ENCODE measurements at regions of chr3 and their contacts with region 1.

Region 1: GRCh38 chr3:83715307-83715706 is 1243.5 kb upstream of the CADM2 start:
- DNase-seq: no peak
- H3K4me3 Mint-ChIP-seq: no peak overlapping the region
- H3K27ac Mint-ChIP-seq: no peak overlapping the region
- H3K4me1 Mint-ChIP-seq: peaks cover 6% of the 10 kb centered on the region
- H3K27me3 Mint-ChIP-seq: no peaks in the 10 kb centered on the region
- CTCF ChIP-seq: no peak

Region 2: DNA sequence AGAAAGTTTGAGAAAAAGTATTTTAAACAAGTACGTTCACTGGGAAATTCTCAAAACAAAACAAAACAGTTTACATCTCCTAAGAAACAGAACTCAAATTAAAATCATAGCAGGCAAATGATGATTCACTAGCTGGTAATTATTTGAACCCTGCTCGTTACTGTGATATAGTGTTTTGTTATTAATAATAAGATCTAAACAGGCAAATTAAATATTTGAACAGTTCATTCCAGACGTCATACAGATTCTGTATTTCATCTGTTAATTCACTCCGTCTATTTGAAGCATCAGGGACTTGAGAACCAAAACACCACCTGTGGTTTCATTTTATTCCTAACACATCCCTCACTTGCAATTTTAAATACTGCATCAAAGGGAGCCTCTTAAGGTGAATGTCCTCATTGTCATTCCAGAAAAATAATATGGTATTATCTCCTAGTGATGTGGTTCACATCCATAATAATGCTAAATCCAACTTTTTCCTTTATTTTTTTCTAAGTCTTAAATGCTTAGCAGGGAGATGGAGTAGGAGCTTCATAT is 147.5 kb before region 1 on chr3:
- CTCF ChIA-PET with region 1: no interaction called
- POLR2A ChIA-PET with region 1: no interaction called
- intact Hi-C with region 1: loop called (anchors 10 kb)
- DNase-seq: no peak
- H3K4me3 Mint-ChIP-seq: no peak overlapping the region
- H3K27ac Mint-ChIP-seq: no peak overlapping the region
- H3K4me1 Mint-ChIP-seq: no peaks in the 10 kb centered on the region
- H3K27me3 Mint-ChIP-seq: no peaks in the 10 kb centered on the region
- CTCF ChIP-seq: no peak

Region 3: DNA sequence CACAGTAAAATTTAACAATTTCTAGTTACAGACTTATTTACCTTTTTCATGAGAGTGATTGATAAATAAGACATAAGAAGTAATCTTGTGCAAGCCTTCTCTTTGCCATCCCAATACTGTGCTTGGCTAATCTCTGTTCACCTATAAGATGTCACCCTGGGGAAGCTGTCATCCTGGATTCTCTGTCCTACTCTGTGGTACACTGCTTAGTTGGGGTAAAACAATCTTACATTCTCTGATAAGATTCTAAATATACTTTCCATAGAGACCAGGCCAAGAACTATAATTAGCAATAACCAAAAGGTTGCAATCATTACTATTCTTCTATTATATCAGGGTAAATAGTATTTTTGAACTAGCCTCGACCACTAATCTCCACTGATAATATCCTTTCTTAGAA is 25.2 kb after region 1 on chr3:
- CTCF ChIA-PET with region 1: no interaction called
- POLR2A ChIA-PET with region 1: no interaction called
- intact Hi-C with region 1: no loop called
- DNase-seq: no peak
- H3K4me3 Mint-ChIP-seq: no peak overlapping the region
- H3K27ac Mint-ChIP-seq: no peak overlapping the region
- H3K4me1 Mint-ChIP-seq: no peaks in the 10 kb centered on the region
- H3K27me3 Mint-ChIP-seq: no peaks in the 10 kb centered on the region
- CTCF ChIP-seq: no peak

Region 4: GRCh38 chr3:83769791-83770646 is 54.7 kb after region 1 on chr3:
- CTCF ChIA-PET with region 1: no interaction called
- POLR2A ChIA-PET with region 1: no interaction called
- intact Hi-C with region 1: no loop called
- DNase-seq: no peak
- H3K4me3 Mint-ChIP-seq: no peak overlapping the region
- H3K27ac Mint-ChIP-seq: no peak overlapping the region
- H3K4me1 Mint-ChIP-seq: no peaks in the 10 kb centered on the region
- H3K27me3 Mint-ChIP-seq: no peaks in the 10 kb centered on the region
- CTCF ChIP-seq: no peak